Gastrocnemius medialis (tissue), 4 donors: ENCODE measurements at regions of chr2 and their contacts with region 1.

Region 1: DNA sequence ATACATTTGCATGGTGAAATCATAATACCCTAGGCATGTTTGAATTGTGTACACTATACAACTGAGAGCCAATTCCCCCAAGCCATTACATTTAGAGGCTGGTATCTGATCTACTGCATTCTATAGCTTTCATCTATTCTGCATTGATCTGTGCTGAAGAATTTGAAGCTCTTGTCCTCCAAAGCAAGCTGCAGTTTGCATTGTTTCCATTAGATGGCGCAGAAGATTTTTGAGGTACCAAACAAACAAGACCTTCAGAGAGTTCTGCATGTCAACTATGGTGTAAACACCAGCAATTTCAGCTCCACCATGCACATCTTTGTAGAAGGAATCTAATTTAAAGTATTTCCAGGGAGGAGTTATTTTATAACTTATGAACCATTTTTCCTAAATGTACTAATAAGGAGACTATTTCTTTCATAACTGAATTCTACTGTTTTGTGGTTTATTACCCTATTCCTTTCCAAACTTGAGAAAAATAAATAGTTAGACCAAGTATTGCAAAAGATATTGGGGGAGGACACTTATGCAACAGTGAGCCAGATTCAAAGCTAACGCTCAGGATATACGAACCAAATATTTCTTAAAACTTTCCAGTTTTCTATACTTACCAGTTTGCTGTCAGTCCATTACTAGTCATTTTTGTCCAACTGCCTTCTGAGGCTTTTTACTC is 761.8 kb upstream of the ACVR2A start:
- DNase-seq: peak; percentile 9 to 20
- ATAC-seq: peak; percentile 68 to 74
- H3K4me3 ChIP-seq: no peak overlapping the region
- H3K27ac ChIP-seq: peak overlapping the region in 2 of 4 donors; percentile 0 to 50
- H3K4me1 ChIP-seq: no peaks in the 10 kb centered on the region
- H3K27me3 ChIP-seq: no peaks in the 10 kb centered on the region
- CTCF ChIP-seq: peak; percentile 72 to 88 (median 86)
- POLR2A ChIP-seq: no peak

Region 2: GRCh38 chr2:147017951-147018642 is 64.9 kb before region 1 on chr2:
- in situ Hi-C with region 1: no loop called
- intact Hi-C with region 1: no loop called
- DNase-seq: no peak
- ATAC-seq: no peak
- H3K4me3 ChIP-seq: no peak overlapping the region
- H3K27ac ChIP-seq: no peak overlapping the region
- H3K4me1 ChIP-seq: no peaks in the 10 kb centered on the region
- H3K27me3 ChIP-seq: no peaks in the 10 kb centered on the region
- CTCF ChIP-seq: no peak
- POLR2A ChIP-seq: no peak

Region 3: DNA sequence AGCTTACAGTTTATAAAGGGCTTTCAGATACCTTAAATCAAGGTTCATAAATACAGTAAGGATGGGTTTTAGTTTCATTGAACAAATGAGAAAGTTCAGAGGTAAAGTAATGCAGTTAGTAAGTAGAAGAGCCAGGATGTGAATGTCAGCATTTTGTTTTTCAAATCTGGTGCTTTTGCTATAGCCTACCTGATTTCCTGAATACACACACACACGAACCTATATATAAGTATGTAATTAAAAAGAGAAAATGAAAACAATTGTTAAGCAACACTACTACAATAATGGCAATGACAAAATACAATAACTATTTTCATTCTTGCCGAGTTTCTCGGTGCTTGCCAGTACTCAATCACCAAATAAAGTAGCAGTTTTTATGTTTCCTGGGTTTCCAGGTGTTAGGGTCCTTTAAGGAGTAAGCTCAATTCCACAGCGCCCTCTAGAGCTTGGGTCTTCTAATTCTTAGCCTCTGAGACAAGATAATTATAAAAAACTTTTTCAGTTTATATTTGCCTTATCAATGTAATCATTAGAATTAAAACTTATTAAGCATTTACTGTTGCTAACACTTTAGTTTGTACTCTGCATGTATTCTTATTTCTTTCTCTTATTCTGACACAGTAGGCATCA is 248.9 kb after region 1 on chr2:
- in situ Hi-C with region 1: loop called in 2 of 4 experiments (anchors 5 to 25 kb)
- intact Hi-C with region 1: loop called (anchors 1 kb)
- DNase-seq: no peak
- ATAC-seq: no peak
- H3K4me3 ChIP-seq: no peak overlapping the region
- H3K27ac ChIP-seq: no peak overlapping the region
- H3K4me1 ChIP-seq: no peaks in the 10 kb centered on the region
- H3K27me3 ChIP-seq: no peaks in the 10 kb centered on the region
- CTCF ChIP-seq: peak in 3 of 5 experiments; percentile 20 to 52 (median 51)
- POLR2A ChIP-seq: no peak

Region 4: GRCh38 chr2:147904044-147904443 is 821.1 kb after region 1 on chr2:
- in situ Hi-C with region 1: loop called in 3 of 4 experiments (anchors 5 to 25 kb)
- intact Hi-C with region 1: no loop called
- DNase-seq: no peak
- ATAC-seq: no peak
- H3K4me3 ChIP-seq: no peak overlapping the region
- H3K27ac ChIP-seq: no peak overlapping the region
- H3K4me1 ChIP-seq: peaks cover 10 to 21% of the 10 kb centered on the region in 2 donors
- H3K27me3 ChIP-seq: no peaks in the 10 kb centered on the region
- CTCF ChIP-seq: no peak
- POLR2A ChIP-seq: no peak